Pancreas (tissue), 10 donors: ENCODE measurements at regions of chrX and their contacts with region 1.

Region 1: DNA sequence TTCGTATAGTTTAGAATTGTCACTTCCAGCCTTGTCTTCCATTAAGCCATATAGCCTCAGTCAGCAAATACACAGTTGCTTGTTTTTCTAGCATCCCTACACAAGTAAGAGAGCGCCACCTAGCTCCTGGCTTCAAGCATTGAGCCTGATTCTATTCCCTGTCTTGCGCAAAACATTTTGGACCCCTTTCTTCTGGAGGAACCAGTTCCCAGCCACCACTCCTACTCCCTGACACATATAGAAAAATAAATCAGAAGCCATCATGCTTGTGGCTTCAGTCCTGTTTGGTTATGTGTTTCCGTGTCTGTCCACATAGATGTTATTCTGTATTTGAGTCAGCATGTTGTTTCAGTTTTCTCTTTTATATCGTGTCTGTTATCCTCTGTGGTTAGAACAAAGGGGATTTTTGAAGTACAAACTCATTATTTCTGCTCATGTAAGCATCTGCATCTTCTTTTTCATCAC is 59.9 kb downstream of the GK start:
- DNase-seq: peak in 5 of 6 donors; percentile 19 to 61 (median 34)
- ATAC-seq: peak in 3 of 4 donors; percentile 73 to 84 (median 76)
- H3K4me3 ChIP-seq: no peak overlapping the region
- H3K27ac ChIP-seq: no peak overlapping the region
- H3K4me1 ChIP-seq: no peaks in the 10 kb centered on the region
- H3K27me3 ChIP-seq: no peaks in the 10 kb centered on the region
- CTCF ChIP-seq: peak in 2 of 4 donors; percentile 32 to 39

Region 2: DNA sequence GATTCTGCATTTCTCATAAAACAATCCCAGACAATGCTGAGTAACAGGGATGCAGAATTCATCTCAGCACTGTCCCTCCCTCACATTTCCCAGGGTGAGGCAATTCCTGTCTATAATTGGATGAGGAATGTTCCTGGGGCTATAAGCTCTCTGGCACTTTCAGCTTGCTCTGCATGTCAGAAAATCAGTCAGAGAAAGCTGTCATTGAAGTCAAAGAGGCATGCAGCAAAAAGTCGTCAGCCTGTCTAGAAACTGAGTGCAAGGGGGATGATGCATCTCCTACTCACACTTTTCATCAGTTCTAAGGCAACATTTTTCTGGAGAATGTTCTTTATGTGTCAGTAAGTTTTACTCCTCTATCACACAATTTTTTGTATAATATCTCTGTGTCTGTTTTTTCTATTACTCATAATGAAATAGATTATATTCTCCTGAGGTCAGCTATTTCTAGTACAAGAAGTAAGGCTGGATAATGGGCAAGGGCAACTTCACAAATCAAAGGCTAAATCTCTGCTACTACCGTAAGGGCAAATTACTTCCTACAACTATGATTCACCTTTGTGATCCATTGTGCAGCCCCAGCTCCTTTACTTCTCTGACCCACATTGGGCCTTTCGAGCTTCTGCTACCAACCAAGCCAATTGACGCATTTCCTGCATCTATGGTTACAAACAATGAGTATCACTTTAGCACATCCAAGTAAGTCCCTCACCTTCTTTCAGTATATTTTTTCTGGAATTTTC is 191.5 kb before region 1 on chrX:
- intact Hi-C with region 1: no loop called
- DNase-seq: no peak
- ATAC-seq: no peak
- H3K4me3 ChIP-seq: no peak overlapping the region
- H3K27ac ChIP-seq: no peak overlapping the region
- H3K4me1 ChIP-seq: no peaks in the 10 kb centered on the region
- H3K27me3 ChIP-seq: peaks cover 0 to 25% (median 0%) of the 10 kb centered on the region in 4 donors
- CTCF ChIP-seq: no peak

Region 3: GRCh38 chrX:30570505-30570904 is 142.6 kb before region 1 on chrX:
- intact Hi-C with region 1: loop called in 1 of 3 experiments (anchors 5 kb)
- DNase-seq: no peak
- ATAC-seq: peak in 3 of 4 donors; percentile 60 to 71 (median 70)
- H3K4me3 ChIP-seq: no peak overlapping the region
- H3K27ac ChIP-seq: no peak overlapping the region
- H3K4me1 ChIP-seq: peaks cover 0 to 15% (median 5%) of the 10 kb centered on the region in 3 donors
- H3K27me3 ChIP-seq: no peaks in the 10 kb centered on the region
- CTCF ChIP-seq: peak in 3 of 4 donors; percentile 37 to 54 (median 53)

Region 4: GRCh38 chrX:30612250-30612655 is 100.8 kb before region 1 on chrX:
- intact Hi-C with region 1: no loop called
- DNase-seq: no peak
- ATAC-seq: peak; percentile 38 to 73 (median 54)
- H3K4me3 ChIP-seq: no peak overlapping the region
- H3K27ac ChIP-seq: no peak overlapping the region
- H3K4me1 ChIP-seq: no peaks in the 10 kb centered on the region
- H3K27me3 ChIP-seq: peaks cover 0 to 3% (median 0%) of the 10 kb centered on the region in 4 donors
- CTCF ChIP-seq: no peak

Region 5: DNA sequence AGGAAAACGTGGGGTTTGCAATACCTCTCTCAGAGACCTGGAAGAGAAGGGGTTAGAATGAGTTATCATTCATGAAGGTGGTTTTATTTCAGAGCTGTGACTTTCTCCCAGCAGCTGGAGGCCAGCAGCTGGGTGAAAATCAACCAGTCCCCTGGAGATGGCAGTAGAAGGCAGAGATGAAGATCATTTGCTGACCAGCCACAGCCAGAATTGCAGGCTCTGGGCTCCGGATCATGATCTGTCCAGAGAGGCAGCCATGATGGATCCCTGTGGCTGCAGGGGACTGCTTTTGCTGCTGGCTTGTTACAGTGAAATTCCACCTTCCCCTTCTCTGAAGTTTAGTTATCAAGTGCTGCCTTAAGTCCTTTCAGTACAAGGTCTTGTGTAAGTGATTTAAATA is 222.9 kb after region 1 on chrX:
- intact Hi-C with region 1: no loop called
- DNase-seq: peak in 1 of 6 donors; percentile 16
- ATAC-seq: peak in 3 of 4 donors; percentile 51 to 79 (median 66)
- H3K4me3 ChIP-seq: no peak overlapping the region
- H3K27ac ChIP-seq: no peak overlapping the region
- H3K4me1 ChIP-seq: peaks cover 0 to 5% (median 0%) of the 10 kb centered on the region in 3 donors
- H3K27me3 ChIP-seq: peaks cover 0 to 2% (median 0%) of the 10 kb centered on the region in 4 donors
- CTCF ChIP-seq: no peak

Region 6: GRCh38 chrX:31092970-31093638 is 380.0 kb after region 1 on chrX:
- intact Hi-C with region 1: no loop called
- DNase-seq: no peak
- ATAC-seq: no peak
- H3K4me3 ChIP-seq: no peak overlapping the region
- H3K27ac ChIP-seq: no peak overlapping the region
- H3K4me1 ChIP-seq: no peaks in the 10 kb centered on the region
- H3K27me3 ChIP-seq: peaks cover 0 to 5% (median 0%) of the 10 kb centered on the region in 4 donors
- CTCF ChIP-seq: no peak